ENCODE measurements at regions of chr14 and their contacts with region 1.

Region 1: DNA sequence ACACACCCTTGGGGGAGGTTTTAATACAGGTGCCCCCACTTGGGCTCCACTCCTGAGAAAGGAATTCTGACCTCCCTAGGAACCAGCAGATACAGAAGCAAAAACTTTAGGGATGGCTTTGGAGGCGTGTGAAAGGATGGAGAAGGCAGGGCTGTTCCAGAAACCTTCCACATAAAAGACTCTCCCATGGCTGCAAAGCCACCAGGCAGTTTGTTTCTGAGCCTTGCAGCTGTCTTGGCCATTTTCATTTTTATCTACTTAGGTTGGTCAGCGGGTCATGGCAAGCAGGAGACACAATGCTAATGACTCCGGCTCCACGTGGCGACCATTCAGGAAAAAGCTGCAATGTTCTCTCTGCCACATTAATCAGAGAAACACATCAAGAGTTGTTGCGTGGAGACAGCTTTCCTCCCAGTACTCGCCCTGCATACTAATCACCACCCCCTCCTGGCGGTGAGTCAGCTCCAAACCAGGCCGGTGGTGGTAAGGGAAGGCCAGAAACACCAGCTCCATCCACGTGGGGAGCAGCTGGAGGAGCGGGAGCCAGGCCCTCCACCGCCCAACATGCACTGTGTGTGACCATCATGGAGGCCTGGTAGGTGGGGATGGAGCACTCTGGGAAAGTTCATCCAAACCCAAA is 30.9 kb upstream of the IRF2BPL start:
- DNase-seq: peak; percentile 94
- H3K4me3 ChIP-seq: no peak overlapping the region
- H3K27ac ChIP-seq: peak overlapping the region; percentile 41
- H3K4me1 ChIP-seq: peaks cover 23% of the 10 kb centered on the region
- H3K27me3 ChIP-seq: no peaks in the 10 kb centered on the region
- CTCF ChIP-seq: peak; percentile 38 to 57
- POLR2A ChIP-seq: no peak

Region 2: DNA sequence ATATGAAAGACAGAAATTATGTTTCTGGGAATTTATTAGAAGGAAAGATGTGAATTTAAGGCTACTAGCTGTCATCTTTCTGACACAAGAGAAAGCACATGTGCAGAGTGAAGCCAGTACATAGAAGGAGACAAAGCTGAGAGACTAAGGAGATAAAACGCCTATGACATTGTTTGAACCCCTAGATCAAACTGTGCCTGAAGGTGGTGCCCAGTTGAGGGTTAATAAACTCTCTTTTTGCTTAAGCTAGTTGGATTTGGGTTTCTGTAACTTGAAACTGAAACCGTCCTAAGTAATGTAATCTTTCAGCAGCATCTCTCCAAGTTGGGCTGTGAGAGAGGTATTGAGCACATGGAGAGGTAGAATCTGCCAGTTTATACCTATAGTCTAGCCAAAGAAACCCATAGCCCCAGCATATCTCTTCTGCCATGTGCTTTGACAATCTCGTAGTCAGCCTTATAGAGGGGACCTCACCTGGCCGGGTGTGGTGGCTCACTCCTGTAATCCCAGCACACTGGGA is 149.0 kb before region 1 on chr14:
- CTCF ChIA-PET with region 1: interaction called, 209 read pairs
- POLR2A ChIA-PET with region 1: no interaction called
- dilution Hi-C with region 1: no loop called
- intact Hi-C with region 1: no loop called
- DNase-seq: no peak
- H3K4me3 ChIP-seq: no peak overlapping the region
- H3K27ac ChIP-seq: no peak overlapping the region
- H3K4me1 ChIP-seq: peaks cover 3% of the 10 kb centered on the region
- H3K27me3 ChIP-seq: no peaks in the 10 kb centered on the region
- CTCF ChIP-seq: no peak
- POLR2A ChIP-seq: no peak

Region 3: GRCh38 chr14:76947078-76947837 is 112.1 kb before region 1 on chr14:
- CTCF ChIA-PET with region 1: interaction called, 14 read pairs
- POLR2A ChIA-PET with region 1: no interaction called
- dilution Hi-C with region 1: no loop called
- intact Hi-C with region 1: no loop called
- DNase-seq: peak; percentile 83
- H3K4me3 ChIP-seq: no peak overlapping the region
- H3K27ac ChIP-seq: peak overlapping the region; percentile 72
- H3K4me1 ChIP-seq: peaks cover 40% of the 10 kb centered on the region
- H3K27me3 ChIP-seq: no peaks in the 10 kb centered on the region
- CTCF ChIP-seq: peak; percentile 28 to 54
- POLR2A ChIP-seq: no peak

Region 4: DNA sequence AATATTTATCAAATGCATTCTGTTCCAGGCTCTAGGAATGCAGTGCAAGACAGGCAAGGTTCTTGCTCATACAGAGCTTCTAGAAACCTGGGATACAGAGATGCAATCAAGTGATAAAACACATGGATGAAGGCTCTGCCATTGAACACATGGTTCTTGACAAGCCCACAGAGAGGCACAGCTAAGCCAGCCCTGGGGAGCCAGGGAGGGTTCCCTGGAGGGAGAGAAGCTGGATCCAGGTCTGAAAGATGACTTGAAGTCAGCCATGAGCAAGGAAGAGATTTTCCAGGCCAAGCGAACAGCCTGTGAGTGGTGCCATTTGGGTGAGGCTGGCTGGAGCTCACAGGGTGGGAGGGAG is 97.1 kb before region 1 on chr14:
- CTCF ChIA-PET with region 1: interaction called, 10 read pairs
- POLR2A ChIA-PET with region 1: interaction called, 3 read pairs
- dilution Hi-C with region 1: no loop called
- intact Hi-C with region 1: loop called (anchors 1 kb)
- DNase-seq: no peak
- H3K4me3 ChIP-seq: peak overlapping the region in 1 of 3 experiments; percentile 43
- H3K27ac ChIP-seq: peak overlapping the region; percentile 76
- H3K4me1 ChIP-seq: peaks cover 43% of the 10 kb centered on the region
- H3K27me3 ChIP-seq: no peaks in the 10 kb centered on the region
- CTCF ChIP-seq: no peak
- POLR2A ChIP-seq: no peak

Region 5: GRCh38 chr14:77014004-77014604 is 45.3 kb before region 1 on chr14:
- CTCF ChIA-PET with region 1: no interaction called
- POLR2A ChIA-PET with region 1: no interaction called
- dilution Hi-C with region 1: no loop called
- intact Hi-C with region 1: no loop called
- DNase-seq: peak; percentile 32
- H3K4me3 ChIP-seq: no peak overlapping the region
- H3K27ac ChIP-seq: no peak overlapping the region
- H3K4me1 ChIP-seq: no peaks in the 10 kb centered on the region
- H3K27me3 ChIP-seq: no peaks in the 10 kb centered on the region
- CTCF ChIP-seq: no peak
- POLR2A ChIP-seq: no peak

Region 6: GRCh38 chr14:77040059-77040740 is 19.2 kb before region 1 on chr14:
- CTCF ChIA-PET with region 1: interaction called, 20 read pairs
- POLR2A ChIA-PET with region 1: no interaction called
- dilution Hi-C with region 1: no loop called
- intact Hi-C with region 1: loop called (anchors 1 kb)
- DNase-seq: peak; percentile 99
- H3K4me3 ChIP-seq: peak overlapping the region in 1 of 3 experiments; percentile 29
- H3K27ac ChIP-seq: peak overlapping the region; percentile 93
- H3K4me1 ChIP-seq: peaks cover 68% of the 10 kb centered on the region
- H3K27me3 ChIP-seq: no peaks in the 10 kb centered on the region
- CTCF ChIP-seq: no peak
- POLR2A ChIP-seq: no peak

Region 7: GRCh38 chr14:77076113-77076631 is 16.8 kb after region 1 on chr14:
- CTCF ChIA-PET with region 1: interaction called, 20 read pairs
- POLR2A ChIA-PET with region 1: no interaction called
- dilution Hi-C with region 1: no loop called
- intact Hi-C with region 1: no loop called
- DNase-seq: peak; percentile 89
- H3K4me3 ChIP-seq: no peak overlapping the region
- H3K27ac ChIP-seq: peak overlapping the region; percentile 86
- H3K4me1 ChIP-seq: peaks cover 14% of the 10 kb centered on the region
- H3K27me3 ChIP-seq: no peaks in the 10 kb centered on the region
- CTCF ChIP-seq: no peak
- POLR2A ChIP-seq: no peak

Region 8: DNA sequence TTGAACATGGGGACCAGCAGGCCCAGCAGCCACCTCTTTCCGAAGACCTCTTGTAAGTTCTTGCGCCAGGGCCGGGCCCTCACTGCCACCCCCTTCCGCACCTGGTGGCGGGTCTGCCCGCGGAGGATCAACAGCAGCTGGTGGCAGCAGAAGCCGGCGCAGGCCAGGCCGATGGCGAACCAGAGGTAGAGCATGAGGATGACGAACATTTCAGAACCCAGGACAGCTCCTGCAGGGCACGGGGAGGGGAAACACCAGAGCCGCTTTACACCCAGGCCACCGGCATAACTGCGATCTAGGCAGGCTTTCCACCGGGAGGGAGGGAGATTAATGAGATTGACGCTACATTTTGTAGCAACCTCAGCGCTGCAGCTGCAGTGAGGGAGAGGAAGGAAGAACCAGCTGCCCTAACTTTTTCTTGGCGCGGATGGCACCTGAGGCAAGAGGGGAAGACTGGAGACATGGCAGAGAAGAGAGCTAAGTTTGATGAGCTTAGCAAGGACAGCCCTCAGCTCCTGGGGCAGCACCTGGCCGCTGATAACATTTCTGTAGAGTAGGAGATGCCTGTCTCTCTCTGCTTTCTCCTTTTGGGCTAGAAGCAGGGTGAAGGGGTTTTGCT is 74.4 kb after region 1 on chr14:
- CTCF ChIA-PET with region 1: no interaction called
- POLR2A ChIA-PET with region 1: no interaction called
- dilution Hi-C with region 1: no loop called
- intact Hi-C with region 1: no loop called
- DNase-seq: peak; percentile 61
- H3K4me3 ChIP-seq: no peak overlapping the region
- H3K27ac ChIP-seq: no peak overlapping the region
- H3K4me1 ChIP-seq: no peaks in the 10 kb centered on the region
- H3K27me3 ChIP-seq: peaks cover 5 to 13% of the 10 kb centered on the region in 2 experiments
- CTCF ChIP-seq: no peak
- POLR2A ChIP-seq: no peak

Region 9: GRCh38 chr14:77186911-77187648 is 127.7 kb after region 1 on chr14:
- CTCF ChIA-PET with region 1: no interaction called
- POLR2A ChIA-PET with region 1: no interaction called
- dilution Hi-C with region 1: no loop called
- intact Hi-C with region 1: no loop called
- DNase-seq: no peak
- H3K4me3 ChIP-seq: no peak overlapping the region
- H3K27ac ChIP-seq: no peak overlapping the region
- H3K4me1 ChIP-seq: no peaks in the 10 kb centered on the region
- H3K27me3 ChIP-seq: peaks cover 4 to 16% of the 10 kb centered on the region in 2 experiments
- CTCF ChIP-seq: no peak
- POLR2A ChIP-seq: no peak

Region 10: DNA sequence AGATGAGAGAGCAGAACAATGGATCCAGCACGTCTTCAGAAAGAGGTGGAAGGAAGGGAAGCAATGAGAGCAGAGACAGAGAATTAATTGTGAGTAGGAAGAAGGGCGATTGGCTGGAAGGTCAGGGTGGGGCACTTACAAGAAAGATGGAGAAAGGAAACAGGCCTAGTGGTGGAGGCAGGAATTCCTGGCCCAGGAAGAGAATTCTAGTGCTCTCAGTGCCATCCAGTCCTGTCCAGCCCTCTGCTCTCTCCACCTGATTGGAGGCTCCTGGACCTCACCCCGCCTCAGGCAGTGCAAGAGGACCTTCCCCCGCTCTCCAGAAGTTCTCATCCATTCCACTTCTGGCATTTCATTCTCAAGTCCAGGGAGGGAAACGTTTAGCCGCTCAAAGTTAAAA is 168.7 kb after region 1 on chr14:
- CTCF ChIA-PET with region 1: no interaction called
- POLR2A ChIA-PET with region 1: no interaction called
- dilution Hi-C with region 1: no loop called
- intact Hi-C with region 1: no loop called
- DNase-seq: no peak
- H3K4me3 ChIP-seq: no peak overlapping the region
- H3K27ac ChIP-seq: no peak overlapping the region
- H3K4me1 ChIP-seq: no peaks in the 10 kb centered on the region
- H3K27me3 ChIP-seq: no peaks in the 10 kb centered on the region
- CTCF ChIP-seq: no peak
- POLR2A ChIP-seq: no peak

Measured in endothelial cell of umbilical vein (primary cell).